ENCODE measurements at regions of chr9 and their contacts with region 1.

Region 1: GRCh38 chr9:94014065-94014654 is 59.0 kb upstream of the BARX1 start:
- DNase-seq: peak; percentile 46
- H3K4me3 ChIP-seq: no peak overlapping the region
- H3K27ac ChIP-seq: no peak overlapping the region
- H3K4me1 ChIP-seq: no peaks in the 10 kb centered on the region; a peak in 1 of 4 replicates
- H3K27me3 ChIP-seq: no peaks in the 10 kb centered on the region
- CTCF ChIP-seq: peak; percentile 67
- EP300 ChIP-seq: no peak
- RAD21 ChIP-seq: peak; percentile 61

Region 2: DNA sequence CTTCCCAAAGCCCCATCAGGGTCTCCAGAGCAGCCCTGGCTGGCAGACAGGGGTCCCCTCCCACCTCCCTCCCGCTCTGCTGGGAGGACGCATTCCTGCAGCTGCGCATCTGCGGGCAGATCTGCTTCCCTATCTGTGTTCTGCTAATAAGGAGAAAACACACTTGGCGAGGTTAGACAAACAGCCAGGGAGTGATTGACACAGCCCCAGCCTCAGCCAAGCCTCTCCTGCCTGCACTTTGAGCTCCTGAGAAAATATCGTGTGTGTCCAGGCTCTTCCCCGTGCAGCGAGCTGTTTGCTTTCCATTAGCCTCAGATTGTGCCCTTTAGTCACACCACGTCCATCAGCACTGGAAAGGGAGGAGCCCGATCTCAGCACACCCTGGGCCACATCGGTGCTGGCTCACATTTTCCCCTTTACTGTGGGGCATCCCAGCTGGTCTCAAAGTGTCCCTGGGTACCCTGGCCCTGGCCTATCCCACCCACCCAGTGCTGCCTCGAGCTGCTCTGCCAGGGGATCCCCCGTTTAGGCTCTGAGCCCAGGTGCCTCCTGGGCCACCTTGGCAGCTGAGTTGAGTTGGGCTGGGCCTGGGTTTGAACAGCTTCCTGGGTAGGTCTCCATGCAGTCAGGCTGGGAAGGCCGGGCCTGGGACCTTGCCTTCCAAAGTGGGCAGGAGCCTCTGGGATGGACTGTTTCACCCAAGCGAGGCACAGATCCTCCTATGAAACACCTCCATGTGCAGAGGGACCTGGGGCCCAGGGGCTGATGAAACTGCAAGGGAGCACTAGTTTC is 120.1 kb before region 1 on chr9:
- CTCF ChIA-PET with region 1: no interaction called
- POLR2A ChIA-PET with region 1: no interaction called
- DNase-seq: peak; percentile 8
- H3K4me3 ChIP-seq: no peak overlapping the region
- H3K27ac ChIP-seq: no peak overlapping the region
- H3K4me1 ChIP-seq: peaks cover 0 to 11% of the 10 kb centered on the region in 2 experiments; a peak in 1 of 4 replicates
- H3K27me3 ChIP-seq: no peaks in the 10 kb centered on the region
- CTCF ChIP-seq: no peak
- EP300 ChIP-seq: no peak
- RAD21 ChIP-seq: no peak

Region 3: DNA sequence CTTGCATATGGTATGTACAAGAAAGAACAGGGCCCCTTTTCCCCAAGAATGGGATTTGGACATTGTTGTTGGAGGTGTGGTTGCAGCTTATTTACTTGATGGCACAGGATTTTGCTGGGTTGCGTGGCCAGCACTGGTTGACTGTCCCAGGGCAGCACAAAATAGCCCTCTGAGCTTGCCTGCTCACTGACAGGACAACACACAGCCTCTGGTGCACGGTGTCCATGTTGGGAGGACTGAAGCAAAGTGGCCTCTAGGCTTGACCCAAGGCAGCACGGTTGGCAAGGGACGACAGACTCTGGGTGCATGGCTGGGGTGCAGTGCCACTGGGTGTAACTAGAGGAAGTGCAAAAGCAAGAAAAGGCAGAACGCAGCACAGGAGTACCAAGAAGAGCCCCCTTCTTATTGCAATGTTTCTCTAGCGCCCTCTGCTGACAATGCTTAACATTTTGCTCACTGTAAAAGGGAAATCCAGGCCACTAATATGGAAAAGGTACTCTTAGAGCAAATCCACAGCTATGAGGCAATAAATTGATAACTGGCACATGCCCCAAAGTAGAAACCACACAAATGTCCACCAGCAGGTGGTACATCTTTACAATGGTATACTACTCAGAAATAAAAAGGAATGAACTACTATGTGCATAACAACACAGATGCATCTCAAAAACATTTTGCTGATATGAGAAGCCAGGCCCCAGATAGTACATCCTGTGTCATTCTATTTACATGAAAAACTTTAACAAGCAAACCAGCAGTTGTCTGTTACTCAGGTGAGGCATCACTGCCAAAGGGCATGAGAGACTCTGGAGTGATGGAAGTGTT is 11.6 kb before region 1 on chr9:
- CTCF ChIA-PET with region 1: interaction called, 69 read pairs
- POLR2A ChIA-PET with region 1: no interaction called
- DNase-seq: peak; percentile 46
- H3K4me3 ChIP-seq: peak overlapping the region in 1 of 2 experiments; percentile 52; a peak in 1 of 4 replicates
- H3K27ac ChIP-seq: no peak overlapping the region
- H3K4me1 ChIP-seq: no peaks in the 10 kb centered on the region; a peak in 1 of 4 replicates
- H3K27me3 ChIP-seq: no peaks in the 10 kb centered on the region
- CTCF ChIP-seq: peak; percentile 69
- EP300 ChIP-seq: no peak
- RAD21 ChIP-seq: peak; percentile 61

Region 4: DNA sequence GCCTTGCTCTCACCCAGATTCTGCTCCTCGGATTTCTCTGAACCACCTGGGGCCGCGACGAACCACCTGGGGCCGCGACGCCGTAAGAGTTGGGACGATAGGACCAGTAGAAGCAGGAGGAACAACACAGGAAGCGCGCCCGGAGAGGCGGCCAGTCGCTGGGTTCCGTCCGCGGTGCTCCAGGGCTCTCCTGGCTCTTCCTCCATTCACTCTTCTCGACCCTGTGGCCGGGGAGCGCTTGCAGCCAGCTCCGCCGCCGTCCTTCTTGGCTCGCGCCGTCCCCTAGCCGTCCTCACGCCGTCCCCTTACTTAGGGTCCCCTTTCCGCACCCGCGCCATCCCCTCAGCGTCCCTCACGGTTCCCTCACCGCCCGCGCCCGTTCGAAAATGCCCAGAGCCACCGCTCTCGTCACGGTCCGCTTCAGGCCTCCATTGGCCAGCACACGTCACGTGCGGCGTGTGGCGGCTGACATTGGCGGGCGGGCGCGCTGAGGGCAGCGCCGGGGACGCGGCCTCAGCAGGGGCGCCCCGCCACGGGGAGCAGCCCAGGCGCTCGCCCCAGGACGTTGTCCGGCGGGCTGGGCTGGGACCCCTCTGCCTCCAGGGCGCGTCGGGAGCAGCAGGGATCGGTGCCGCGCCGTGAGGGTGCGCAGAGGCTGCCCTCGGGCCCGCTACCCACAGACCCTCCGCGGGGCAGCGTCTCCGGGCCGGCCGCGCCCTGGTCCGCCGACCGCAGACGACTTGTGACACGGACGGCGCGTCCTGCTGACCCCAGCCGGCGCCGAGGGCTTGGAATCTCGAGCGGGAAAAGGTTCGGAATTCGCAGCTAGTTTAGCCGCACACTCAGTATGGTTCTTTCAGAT is 16.4 kb after region 1 on chr9:
- CTCF ChIA-PET with region 1: interaction called, 30 read pairs
- POLR2A ChIA-PET with region 1: no interaction called
- DNase-seq: peak; percentile 95
- H3K4me3 ChIP-seq: peak overlapping the region; percentile 87 to 94
- H3K27ac ChIP-seq: peak overlapping the region; percentile 41 to 85; a peak in 3 of 4 replicates
- H3K4me1 ChIP-seq: peaks cover 0 to 4% of the 10 kb centered on the region in 2 experiments; a peak in 1 of 4 replicates
- H3K27me3 ChIP-seq: no peaks in the 10 kb centered on the region
- CTCF ChIP-seq: no peak
- EP300 ChIP-seq: no peak
- RAD21 ChIP-seq: no peak

Region 5: GRCh38 chr9:94139672-94140417 is 125.7 kb after region 1 on chr9:
- CTCF ChIA-PET with region 1: no interaction called
- POLR2A ChIA-PET with region 1: no interaction called
- DNase-seq: no peak
- H3K4me3 ChIP-seq: peak overlapping the region in 1 of 2 experiments; percentile 4; a peak in 1 of 4 replicates
- H3K27ac ChIP-seq: peak overlapping the region; percentile 91 to 92
- H3K4me1 ChIP-seq: peaks cover 21 to 24% of the 10 kb centered on the region in 2 experiments
- H3K27me3 ChIP-seq: no peaks in the 10 kb centered on the region
- CTCF ChIP-seq: no peak
- EP300 ChIP-seq: peak in 1 of 2 experiments; percentile 83; a peak in 2 of 4 replicates
- RAD21 ChIP-seq: no peak